Activated T-helper 1 cell treated with anti-CD3 and anti-CD28 coated beads, Interleukin-12 subunit alpha, Interleukin-12 subunit beta, Interleukin-2, Interleukin-4 antibody, amounts not matched to agents 30 ng/mL and 10 ng/mL and 1 ng/mL, durations not matched to agents 14 hours and 24 hours and 36 hours (primary cell): ENCODE measurements at regions of chr3 and their contacts with region 1.

Region 1: DNA sequence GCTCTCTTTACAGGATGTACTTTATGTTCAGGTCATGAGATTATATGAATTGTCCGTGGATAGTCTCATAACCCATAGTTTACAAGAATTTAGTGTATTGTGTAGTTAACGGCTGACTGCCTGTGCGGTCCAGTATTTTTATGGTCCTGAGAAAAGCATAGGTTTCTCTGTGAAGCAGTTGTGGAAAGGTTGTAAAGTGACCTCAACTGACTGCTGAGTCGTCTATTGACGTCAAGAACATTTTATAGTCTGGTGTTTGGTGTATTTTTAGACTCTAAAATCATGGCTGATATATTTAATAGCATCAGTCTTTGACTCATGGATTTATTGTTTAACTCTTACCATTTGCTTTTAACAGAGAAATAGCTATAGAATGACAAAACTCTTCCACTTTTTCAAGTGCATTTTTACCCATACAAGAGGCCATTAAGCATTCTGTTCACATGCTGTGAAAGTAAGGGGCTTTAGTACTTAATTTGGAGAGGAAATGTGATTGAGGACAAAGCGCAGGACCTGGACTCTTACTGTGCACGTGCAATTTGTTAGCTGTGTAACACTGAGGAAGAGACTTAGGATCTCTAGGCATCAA is 240.7 kb downstream of the NFKBIZ start:
- DNase-seq: no peak
- H3K4me3 Mint-ChIP-seq: no peak overlapping the region
- H3K27ac Mint-ChIP-seq: no peak overlapping the region
- H3K4me1 Mint-ChIP-seq: peaks cover 59% of the 10 kb centered on the region
- H3K27me3 Mint-ChIP-seq: peaks cover 1% of the 10 kb centered on the region

Region 2: DNA sequence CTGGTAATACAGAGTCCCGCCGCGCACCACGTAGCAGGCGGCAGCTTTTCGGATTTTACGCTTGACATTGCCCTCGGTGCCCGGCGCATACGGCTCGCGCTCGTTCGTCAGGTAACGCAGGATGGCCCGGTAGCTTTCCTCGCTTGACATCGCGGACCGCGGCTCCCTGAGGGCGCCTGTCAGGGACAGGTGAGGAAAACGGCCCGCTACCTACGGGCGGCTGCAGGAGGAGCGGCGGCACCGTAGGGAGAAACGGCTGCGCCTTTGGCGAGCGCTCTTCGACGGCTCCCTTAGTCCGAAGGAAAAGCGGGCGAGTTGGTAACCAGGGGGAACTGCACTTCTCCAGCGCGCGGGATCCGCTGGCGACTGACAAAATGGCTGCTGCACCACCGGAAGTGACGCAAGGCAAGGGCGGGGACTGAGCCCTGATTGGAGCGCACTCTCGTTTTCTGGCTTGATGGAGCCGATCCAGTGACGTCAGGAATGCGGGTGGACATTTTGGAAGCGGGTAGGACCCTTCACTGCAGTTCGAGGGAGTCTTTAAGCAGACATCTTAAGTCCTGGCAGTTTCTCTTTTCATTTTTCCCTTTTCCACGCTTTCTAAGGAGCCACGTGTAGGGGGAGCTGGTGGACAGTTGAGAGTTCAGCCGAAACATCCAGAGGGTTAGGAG is 413.1 kb before region 1 on chr3 and contains the start of gene ZBTB11:
- intact Hi-C with region 1: loop called (anchors 5 kb)
- DNase-seq: peak; percentile 99
- H3K4me3 Mint-ChIP-seq: peak within 1 kb of the TSS; percentile 96
- H3K27ac Mint-ChIP-seq: peak within 1 kb of the TSS; percentile 97
- H3K4me1 Mint-ChIP-seq: peaks cover 56% of the 10 kb centered on the region
- H3K27me3 Mint-ChIP-seq: no peaks in the 10 kb centered on the region
- total RNA-seq, gene ZBTB11: 29.0 and 31.9 TPM in 2 replicates

Region 3: DNA sequence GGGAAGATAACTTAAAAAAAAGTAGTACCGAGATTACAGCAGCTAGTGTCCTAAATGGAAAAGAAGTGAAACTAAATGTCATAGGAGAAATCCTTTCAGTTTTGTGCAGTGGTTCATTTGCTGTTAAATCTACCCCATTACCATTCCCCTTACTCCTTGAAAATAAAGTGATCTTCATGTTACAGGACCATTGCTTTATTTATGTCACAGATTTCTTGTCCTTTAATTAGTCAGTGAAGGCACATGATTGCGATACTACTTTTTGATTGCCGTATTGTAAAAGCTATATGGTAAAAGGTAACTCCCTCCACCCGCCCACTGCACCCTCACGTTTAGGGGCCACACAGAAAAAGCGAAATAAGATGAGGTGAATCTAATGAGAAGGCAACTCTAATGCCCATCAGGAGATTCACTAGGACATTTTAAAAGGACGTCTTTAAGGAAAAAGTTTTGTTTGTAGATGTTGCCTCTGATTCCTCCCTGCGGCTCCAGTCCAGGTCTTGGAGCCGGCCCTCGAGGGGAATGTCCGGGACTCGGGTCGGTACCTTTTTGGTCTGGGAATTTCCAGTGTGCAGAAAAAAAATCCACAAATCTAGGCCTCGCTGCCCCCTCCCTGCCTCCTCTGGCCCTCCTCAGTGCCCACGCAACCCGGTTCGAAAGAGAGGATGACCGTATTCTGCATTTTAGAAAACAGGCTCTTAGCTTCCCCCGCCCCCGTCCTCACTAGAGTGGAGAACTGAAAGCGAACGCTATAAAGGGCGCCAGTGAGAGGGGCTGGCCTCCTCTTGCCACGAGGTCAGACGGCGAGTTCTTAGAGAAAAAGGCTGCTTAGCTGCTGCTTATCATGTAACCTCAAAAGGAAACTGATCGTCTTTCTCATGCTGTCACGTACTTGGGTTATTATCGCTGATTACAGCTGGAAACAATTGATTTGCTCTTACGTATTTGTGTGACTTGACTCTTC is 262.5 kb before region 1 on chr3:
- intact Hi-C with region 1: loop called (anchors 1 kb)
- DNase-seq: peak; percentile 77
- H3K4me3 Mint-ChIP-seq: peak overlapping the region; percentile 93
- H3K27ac Mint-ChIP-seq: peak overlapping the region; percentile 90
- H3K4me1 Mint-ChIP-seq: peaks cover 63% of the 10 kb centered on the region
- H3K27me3 Mint-ChIP-seq: no peaks in the 10 kb centered on the region

Region 4: DNA sequence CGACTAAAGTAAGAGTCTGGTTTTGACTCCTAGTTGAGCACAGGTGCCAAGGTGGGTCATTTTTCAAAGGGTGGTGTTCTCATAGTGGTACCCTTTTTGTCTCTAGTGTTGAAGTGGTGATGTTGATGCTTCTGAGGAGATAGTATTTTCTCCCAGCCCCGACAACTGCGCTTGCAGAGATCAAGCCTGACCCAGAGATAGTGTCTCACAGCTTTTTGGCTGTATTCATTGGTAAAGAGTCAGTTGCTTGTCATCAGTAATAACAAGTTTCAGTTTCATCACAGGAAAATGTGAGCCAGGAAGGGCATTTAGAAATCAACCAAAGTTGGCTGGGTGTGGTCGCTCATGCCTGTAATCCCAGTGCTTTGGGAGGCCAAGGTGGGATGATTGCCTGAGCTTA is 101.4 kb before region 1 on chr3:
- intact Hi-C with region 1: loop called (anchors 1 kb)
- DNase-seq: no peak
- H3K4me3 Mint-ChIP-seq: no peak overlapping the region
- H3K27ac Mint-ChIP-seq: peak overlapping the region; percentile 47
- H3K4me1 Mint-ChIP-seq: peaks cover 44% of the 10 kb centered on the region
- H3K27me3 Mint-ChIP-seq: peaks cover 11% of the 10 kb centered on the region

Region 5: DNA sequence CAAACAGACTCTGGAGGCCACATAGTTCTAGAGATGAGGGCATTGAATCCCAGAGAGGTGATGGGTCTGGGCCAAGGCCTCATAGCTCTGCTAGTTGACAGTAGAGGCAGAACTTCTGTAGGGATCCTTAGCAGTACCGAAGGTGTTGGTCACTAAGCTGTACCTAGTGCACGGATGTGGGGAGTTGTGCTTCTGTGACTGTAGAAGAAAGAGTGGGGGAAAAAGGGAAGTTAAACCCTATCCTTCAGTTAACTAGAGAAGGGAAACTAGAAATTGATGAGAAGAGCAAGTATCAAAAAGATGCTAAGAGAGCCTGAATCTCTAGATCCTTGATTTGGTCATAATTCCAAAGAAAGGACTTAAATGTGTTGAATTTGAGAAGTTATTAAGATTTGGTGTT is 54.0 kb before region 1 on chr3:
- intact Hi-C with region 1: no loop called
- DNase-seq: no peak
- H3K4me3 Mint-ChIP-seq: no peak overlapping the region
- H3K27ac Mint-ChIP-seq: no peak overlapping the region
- H3K4me1 Mint-ChIP-seq: peaks cover 13% of the 10 kb centered on the region
- H3K27me3 Mint-ChIP-seq: peaks cover 5% of the 10 kb centered on the region

Region 6: GRCh38 chr3:102057781-102058421 is 32.1 kb before region 1 on chr3:
- intact Hi-C with region 1: loop called (anchors 5 kb)
- DNase-seq: peak; percentile 20
- H3K4me3 Mint-ChIP-seq: peak overlapping the region; percentile 1
- H3K27ac Mint-ChIP-seq: peak overlapping the region; percentile 8
- H3K4me1 Mint-ChIP-seq: peaks cover 35% of the 10 kb centered on the region
- H3K27me3 Mint-ChIP-seq: no peaks in the 10 kb centered on the region

Region 7: DNA sequence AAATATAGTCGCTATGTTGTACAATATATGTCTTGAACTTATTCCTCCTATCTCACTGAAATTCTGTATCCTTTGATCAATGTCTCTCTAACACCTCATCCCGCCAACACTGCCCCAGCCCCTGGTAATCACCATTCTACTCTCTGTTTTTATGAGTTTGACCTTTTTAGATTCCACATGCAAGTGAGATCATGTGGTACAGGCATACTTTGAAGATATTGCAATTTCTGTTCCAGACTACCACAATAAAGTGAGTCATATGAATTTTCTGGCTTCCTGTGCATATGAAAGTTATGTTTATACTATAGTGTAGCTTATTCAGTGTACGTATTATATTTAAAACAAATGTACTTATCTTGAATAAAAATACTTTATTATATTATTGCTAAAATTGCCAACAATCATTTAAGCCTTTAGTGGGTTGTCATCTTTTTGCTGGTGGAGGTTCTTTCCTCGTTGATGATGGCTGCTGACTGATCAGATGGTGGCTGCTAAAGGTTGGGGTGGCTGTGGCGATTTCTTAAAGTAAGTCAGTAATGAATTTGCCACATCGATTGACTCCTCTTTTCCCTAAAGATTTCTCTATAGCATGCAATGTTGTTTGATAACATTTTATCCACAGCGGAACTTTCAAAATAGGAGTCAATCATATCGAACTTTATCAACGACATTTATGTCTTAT is 16.6 kb after region 1 on chr3:
- intact Hi-C with region 1: loop called (anchors 1 kb)
- DNase-seq: no peak
- H3K4me3 Mint-ChIP-seq: peak overlapping the region; percentile 5
- H3K27ac Mint-ChIP-seq: peak overlapping the region; percentile 30
- H3K4me1 Mint-ChIP-seq: peaks cover 12% of the 10 kb centered on the region
- H3K27me3 Mint-ChIP-seq: peaks cover 2% of the 10 kb centered on the region

Region 8: GRCh38 chr3:102163036-102163827 is 73.2 kb after region 1 on chr3:
- intact Hi-C with region 1: loop called (anchors 2 kb)
- DNase-seq: no peak
- H3K4me3 Mint-ChIP-seq: no peak overlapping the region
- H3K27ac Mint-ChIP-seq: no peak overlapping the region
- H3K4me1 Mint-ChIP-seq: peaks cover 17% of the 10 kb centered on the region
- H3K27me3 Mint-ChIP-seq: no peaks in the 10 kb centered on the region